ENCODE measurements at regions of chr19 and their contacts with region 1.

Region 1: GRCh38 chr19:19063183-19064097 is at the start of gene SLC25A42:
- DNase-seq: peak; percentile 98
- ATAC-seq: peak; percentile 95
- H3K4me3 ChIP-seq: peak within 1 kb of the TSS; percentile 65 to 89 (median 81)
- H3K27ac ChIP-seq: peak within 1 kb of the TSS; percentile 71
- H3K4me1 ChIP-seq: peaks cover 71% of the 10 kb centered on the region
- H3K27me3 ChIP-seq: no peaks in the 10 kb centered on the region
- CTCF ChIP-seq: peak; percentile 43
- EP300 ChIP-seq: no peak
- POLR2A ChIP-seq: peak; percentile 61 to 66; a peak in 3 of 4 replicates
- RAD21 ChIP-seq: peak; percentile 43; the same call in 1 of the 2 replicates
- total RNA-seq, gene SLC25A42: 13.5 and 18.3 TPM in 2 replicates

Region 2: DNA sequence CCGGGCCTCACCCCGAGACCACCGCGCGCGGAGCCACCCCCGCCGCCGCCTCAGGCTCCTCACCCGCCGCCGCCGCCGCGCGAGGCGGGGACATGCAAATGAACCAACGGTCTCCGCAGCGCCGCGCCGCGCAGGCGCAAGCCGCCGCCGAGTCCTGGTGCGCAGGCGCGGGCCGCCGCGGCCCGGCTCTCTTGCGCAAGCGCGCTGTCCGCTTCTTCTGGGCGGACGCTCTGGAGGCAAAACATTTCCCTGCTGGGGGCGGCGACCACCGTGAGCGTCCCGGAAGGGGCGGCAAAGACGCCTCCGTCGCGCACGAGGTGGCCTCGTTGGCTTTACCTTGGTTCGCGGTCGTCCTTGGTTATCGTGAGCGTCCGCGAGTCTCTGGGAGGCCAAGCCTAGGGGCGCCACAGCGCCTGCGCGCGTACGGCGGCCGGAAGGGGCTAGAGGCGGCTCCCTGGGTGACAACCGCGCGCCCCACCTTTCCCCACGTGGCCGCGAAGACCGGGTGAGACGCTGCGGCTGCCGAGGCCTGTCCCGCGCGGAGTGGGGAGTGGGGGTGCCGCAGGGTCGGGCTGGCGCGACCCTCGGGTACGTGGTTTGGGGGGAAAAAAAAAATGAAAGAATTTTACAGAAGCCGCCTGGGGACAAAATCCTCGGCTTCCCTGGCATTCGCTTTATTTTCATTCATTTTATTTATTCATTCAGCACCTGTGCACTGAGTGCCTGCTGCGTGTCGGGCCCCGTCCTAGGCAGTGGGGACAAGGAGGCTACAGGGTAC is 29.8 kb before region 1 on chr19 and contains the starts of genes ARMC6 and SUGP2:
- CTCF ChIA-PET with region 1: no interaction called
- POLR2A ChIA-PET with region 1: no interaction called
- in situ Hi-C with region 1: no loop called
- intact Hi-C with region 1: loop called (anchors 2 kb)
- DNase-seq: peak; percentile 74
- ATAC-seq: peak; percentile 86
- H3K4me3 ChIP-seq: peak within 1 kb of the TSS; percentile 91 to 98 (median 93)
- H3K27ac ChIP-seq: peak within 1 kb of the TSS; percentile 98
- H3K4me1 ChIP-seq: peaks cover 41% of the 10 kb centered on the region
- H3K27me3 ChIP-seq: no peaks in the 10 kb centered on the region; a peak in 1 of 5 replicates
- CTCF ChIP-seq: peak; percentile 30
- EP300 ChIP-seq: no peak
- POLR2A ChIP-seq: peak; percentile 73 to 74
- RAD21 ChIP-seq: peak; percentile 28
- total RNA-seq, gene ARMC6: 36.8 and 42.7 TPM in 2 replicates
- total RNA-seq, gene SUGP2: 32.3 and 40.6 TPM in 2 replicates

Region 3: DNA sequence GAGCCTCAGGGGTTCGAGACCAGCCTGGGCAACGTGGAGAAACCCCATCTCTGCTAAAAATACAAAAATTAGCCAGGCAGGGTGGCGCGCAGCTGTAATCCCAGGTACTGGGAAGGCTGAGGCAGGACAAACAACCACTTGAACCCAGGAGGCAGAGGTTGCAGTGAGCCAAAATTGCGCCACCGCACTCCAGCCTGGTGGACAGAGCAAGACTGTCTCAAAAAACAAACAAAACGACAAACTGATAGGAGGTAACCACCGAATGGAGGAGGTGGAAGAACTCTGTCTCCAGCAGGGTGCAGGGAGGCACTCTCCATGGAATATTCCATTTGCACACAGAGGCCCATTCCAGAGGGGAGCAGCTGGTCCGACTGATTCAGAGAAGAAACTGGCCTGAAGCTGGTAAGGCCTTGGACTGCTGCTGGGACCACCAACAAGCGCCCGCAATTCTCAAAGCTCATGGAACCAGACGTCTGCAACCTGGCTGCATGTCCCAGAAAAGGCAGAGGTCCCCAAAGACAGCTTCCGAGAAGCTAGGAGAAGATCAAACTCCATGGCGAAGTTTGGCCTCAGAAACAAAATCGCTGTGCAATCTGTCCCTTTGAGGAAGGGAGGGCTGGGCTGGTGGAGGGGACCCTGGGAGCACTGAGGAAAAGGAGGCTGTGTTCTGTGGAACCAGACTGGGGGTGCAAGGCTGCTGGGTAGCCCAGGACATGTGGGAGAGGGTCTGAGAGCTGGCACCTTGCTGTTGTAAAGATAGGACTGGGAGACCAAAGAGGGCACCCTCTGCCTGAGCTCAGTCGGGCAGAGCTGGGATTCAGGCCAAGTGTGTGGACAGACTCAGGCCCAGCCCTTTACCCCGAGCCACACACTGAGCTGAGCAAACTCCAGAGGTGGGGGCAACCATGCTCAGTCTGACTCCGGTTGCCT is 35.5 kb after region 1 on chr19:
- CTCF ChIA-PET with region 1: no interaction called
- POLR2A ChIA-PET with region 1: interaction called, 43 read pairs
- in situ Hi-C with region 1: no loop called
- intact Hi-C with region 1: loop called (anchors 1 kb)
- DNase-seq: peak; percentile 97
- ATAC-seq: peak; percentile 76
- H3K4me3 ChIP-seq: peak overlapping the region; percentile 36 to 61 (median 51); a peak in 5 of 6 replicates
- H3K27ac ChIP-seq: peak overlapping the region; percentile 99
- H3K4me1 ChIP-seq: peaks cover 98% of the 10 kb centered on the region
- H3K27me3 ChIP-seq: no peaks in the 10 kb centered on the region
- CTCF ChIP-seq: peak; percentile 57
- EP300 ChIP-seq: peak in 1 of 2 experiments; percentile 79; a peak in 2 of 4 replicates
- POLR2A ChIP-seq: peak; percentile 56 to 87
- RAD21 ChIP-seq: no peak; the same call in 1 of the 2 replicates

Region 4: GRCh38 chr19:19110410-19111135 is 47.1 kb after region 1 on chr19:
- CTCF ChIA-PET with region 1: no interaction called
- POLR2A ChIA-PET with region 1: interaction called, 5 read pairs
- in situ Hi-C with region 1: loop called (anchors 5 kb)
- intact Hi-C with region 1: loop called (anchors 5 kb)
- DNase-seq: no peak
- ATAC-seq: no peak
- H3K4me3 ChIP-seq: no peak overlapping the region
- H3K27ac ChIP-seq: no peak overlapping the region
- H3K4me1 ChIP-seq: peaks cover 49% of the 10 kb centered on the region
- H3K27me3 ChIP-seq: no peaks in the 10 kb centered on the region
- CTCF ChIP-seq: no peak
- EP300 ChIP-seq: no peak
- POLR2A ChIP-seq: no peak
- RAD21 ChIP-seq: no peak

Region 5: GRCh38 chr19:19115954-19116353 is 52.5 kb after region 1 on chr19:
- CTCF ChIA-PET with region 1: no interaction called
- POLR2A ChIA-PET with region 1: interaction called, 5 read pairs
- in situ Hi-C with region 1: loop called (anchors 5 kb)
- intact Hi-C with region 1: loop called (anchors 5 kb)
- DNase-seq: peak; percentile 45
- ATAC-seq: peak; percentile 63
- H3K4me3 ChIP-seq: no peak overlapping the region
- H3K27ac ChIP-seq: no peak overlapping the region
- H3K4me1 ChIP-seq: peaks cover 37% of the 10 kb centered on the region
- H3K27me3 ChIP-seq: no peaks in the 10 kb centered on the region
- CTCF ChIP-seq: peak; percentile 79
- EP300 ChIP-seq: no peak
- POLR2A ChIP-seq: no peak
- RAD21 ChIP-seq: peak; percentile 84

Region 6: GRCh38 chr19:19138169-19138981 is 74.9 kb after region 1 on chr19 and contains the start of gene TMEM161A:
- CTCF ChIA-PET with region 1: interaction called, 4 read pairs
- POLR2A ChIA-PET with region 1: no interaction called
- in situ Hi-C with region 1: no loop called
- intact Hi-C with region 1: loop called (anchors 2 kb)
- DNase-seq: peak; percentile 96
- ATAC-seq: peak; percentile 99
- H3K4me3 ChIP-seq: peak within 1 kb of the TSS; percentile 67 to 80 (median 70)
- H3K27ac ChIP-seq: peak within 1 kb of the TSS; percentile 66
- H3K4me1 ChIP-seq: peaks cover 14% of the 10 kb centered on the region
- H3K27me3 ChIP-seq: no peaks in the 10 kb centered on the region
- CTCF ChIP-seq: no peak
- EP300 ChIP-seq: no peak
- POLR2A ChIP-seq: peak; percentile 75 to 91
- RAD21 ChIP-seq: peak; percentile 8; the same call in 1 of the 2 replicates
- total RNA-seq, gene TMEM161A: 10.3 and 25.9 TPM in 2 replicates

Measured in HepG2 (cell line).